ENCODE measurements at regions of chr7 and their contacts with region 1.

Region 1: DNA sequence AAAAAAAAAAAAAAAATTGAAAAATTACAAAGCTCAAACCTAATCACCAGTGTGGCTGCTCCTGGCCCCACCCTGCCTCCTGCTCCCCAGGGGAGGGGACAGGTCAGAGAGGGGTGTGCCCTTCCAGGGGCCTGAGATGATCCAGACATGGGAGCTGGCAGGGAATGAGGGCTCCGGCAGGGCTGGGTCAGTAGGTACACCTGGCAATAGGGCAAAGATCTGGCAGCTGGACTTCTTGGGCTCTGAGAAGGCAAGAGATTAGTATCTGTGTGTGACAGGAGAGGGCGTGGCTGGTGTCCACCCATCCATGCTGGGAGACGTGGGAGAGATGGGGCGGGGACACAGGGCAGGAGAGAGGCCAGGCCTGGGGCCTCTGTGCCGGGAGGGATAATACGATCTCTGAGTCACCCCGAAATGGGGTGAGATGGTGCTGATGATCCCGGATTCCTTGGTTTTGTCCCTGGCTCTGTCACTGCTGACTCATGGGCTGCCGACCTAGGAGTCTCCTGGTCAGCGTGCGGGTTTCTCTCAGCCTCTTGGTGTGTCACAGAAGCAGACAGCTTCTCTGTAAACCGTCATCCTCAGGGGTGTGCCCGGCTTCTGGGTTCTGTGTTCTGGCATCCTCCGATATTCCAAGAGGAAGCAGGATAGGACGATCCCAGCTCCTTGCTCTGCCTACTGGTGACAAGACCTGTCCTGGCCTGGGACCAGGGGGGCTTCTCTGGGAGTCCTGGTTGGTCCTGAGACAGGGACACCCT is 8.3 kb upstream of the CLDN4 start:
- DNase-seq: peak; percentile 98
- H3K4me3 Mint-ChIP-seq: peak overlapping the region; percentile 13
- H3K27ac Mint-ChIP-seq: peak overlapping the region; percentile 80
- H3K4me1 Mint-ChIP-seq: peaks cover 31% of the 10 kb centered on the region
- H3K27me3 Mint-ChIP-seq: no peaks in the 10 kb centered on the region
- CTCF ChIP-seq: no peak

Region 2: DNA sequence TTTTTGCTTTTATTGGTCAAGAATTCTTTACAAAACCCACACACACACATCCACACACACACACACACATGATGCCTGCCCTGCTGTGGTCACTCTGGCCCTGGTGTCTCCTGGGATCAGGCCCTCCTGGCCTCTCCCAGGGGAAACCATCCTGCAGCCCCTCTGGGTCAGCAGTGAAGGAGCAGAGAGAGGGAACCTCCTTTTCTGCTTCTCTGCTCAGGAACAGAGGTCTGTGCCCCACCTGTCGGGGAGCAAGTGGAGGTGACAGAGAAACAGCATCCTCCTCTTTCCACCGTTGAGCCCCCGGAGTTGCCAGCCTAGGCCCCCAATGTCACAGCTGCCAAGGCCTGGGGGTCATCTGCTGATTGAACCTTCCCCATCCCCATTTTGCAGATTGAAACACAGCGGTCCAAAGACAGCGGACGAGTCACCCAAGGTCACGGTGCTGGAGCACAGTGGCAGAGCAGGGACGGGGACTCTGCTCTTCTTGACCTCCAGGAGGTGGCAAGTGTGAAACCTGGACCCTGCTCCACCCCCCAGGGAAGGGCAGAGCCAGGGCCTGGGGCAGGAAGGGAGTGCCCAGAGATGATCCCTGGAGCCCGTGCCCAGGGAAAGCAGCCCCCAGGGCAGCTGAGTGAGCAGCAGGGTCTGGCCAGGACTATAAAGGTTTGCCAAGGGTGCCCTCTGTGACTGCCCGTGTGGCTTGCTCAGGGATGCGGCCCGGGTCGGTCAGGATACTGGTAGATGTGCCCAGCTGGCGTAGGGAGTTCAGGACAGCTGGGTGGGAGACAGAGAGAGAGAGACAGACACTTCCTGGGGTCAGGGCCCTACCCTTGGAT is 229.1 kb before region 1 on chr7:
- CTCF ChIA-PET with region 1: no interaction called
- POLR2A ChIA-PET with region 1: no interaction called
- intact Hi-C with region 1: no loop called
- DNase-seq: no peak
- H3K4me3 Mint-ChIP-seq: no peak overlapping the region
- H3K27ac Mint-ChIP-seq: no peak overlapping the region
- H3K4me1 Mint-ChIP-seq: no peaks in the 10 kb centered on the region
- H3K27me3 Mint-ChIP-seq: peaks cover 11% of the 10 kb centered on the region
- CTCF ChIP-seq: no peak

Region 3: DNA sequence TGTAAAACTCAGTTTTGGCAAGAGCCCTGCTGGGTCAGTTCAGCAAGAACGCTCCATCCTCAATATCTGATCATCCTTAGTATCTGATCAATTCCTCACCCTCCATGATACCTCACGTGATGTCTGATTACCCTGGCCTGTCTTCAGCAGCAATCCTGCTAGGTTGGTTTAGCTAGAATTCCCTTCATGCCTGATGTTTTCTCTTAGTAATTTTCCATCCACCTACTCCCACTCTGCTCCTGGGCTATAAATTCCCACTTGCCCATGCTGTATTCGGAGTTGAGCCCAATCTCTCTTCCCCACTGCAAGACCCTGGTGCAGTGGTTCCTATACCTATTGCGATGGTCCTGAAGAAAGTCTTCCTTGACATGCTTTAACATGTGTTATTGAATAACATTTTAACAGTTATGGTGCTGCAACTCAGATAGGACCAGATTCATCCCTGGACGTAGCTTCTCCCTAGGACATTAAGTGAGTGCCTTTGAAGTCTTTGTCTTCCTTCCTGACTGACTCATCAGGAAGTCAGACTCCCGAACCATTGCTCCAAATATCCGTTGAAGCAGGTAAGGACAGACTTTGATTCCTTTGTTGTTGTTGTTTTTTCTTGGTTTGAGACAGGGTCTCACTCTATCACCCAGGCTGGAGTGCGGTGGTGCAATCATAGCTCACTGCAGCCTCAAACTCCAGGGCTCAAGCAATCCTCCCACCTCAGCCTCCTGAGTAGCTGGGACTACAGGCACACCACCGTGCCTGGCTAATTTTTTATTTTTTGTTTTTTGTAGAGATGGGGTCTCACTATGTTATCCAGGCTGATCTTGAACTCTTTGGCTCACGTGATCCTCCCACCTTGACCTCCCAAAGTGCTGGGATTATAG is 23.0 kb before region 1 on chr7:
- CTCF ChIA-PET with region 1: interaction called, 4 read pairs
- POLR2A ChIA-PET with region 1: interaction called, 17 read pairs
- intact Hi-C with region 1: no loop called
- DNase-seq: peak; percentile 33
- H3K4me3 Mint-ChIP-seq: no peak overlapping the region
- H3K27ac Mint-ChIP-seq: no peak overlapping the region
- H3K4me1 Mint-ChIP-seq: peaks cover 7% of the 10 kb centered on the region
- H3K27me3 Mint-ChIP-seq: no peaks in the 10 kb centered on the region
- CTCF ChIP-seq: no peak

Region 4: DNA sequence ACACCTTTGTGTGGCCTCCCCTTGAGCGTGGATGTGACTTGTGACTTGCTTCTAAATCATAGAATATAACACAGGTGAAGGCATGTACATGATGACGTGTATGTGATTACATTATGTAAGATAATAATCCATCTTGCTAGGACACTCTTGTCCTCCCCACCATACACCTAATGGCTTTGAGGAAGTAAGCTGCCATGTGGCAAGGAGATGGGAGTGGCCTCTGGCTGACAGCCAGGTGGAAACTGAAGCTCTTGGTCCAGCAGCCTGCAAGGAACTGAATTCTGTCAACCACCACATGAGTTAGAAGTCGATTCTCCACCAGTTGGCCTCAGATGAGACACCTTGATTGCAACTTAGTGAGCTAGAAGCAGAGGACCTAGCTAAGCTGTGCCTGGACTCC is 138.1 kb after region 1 on chr7:
- CTCF ChIA-PET with region 1: no interaction called
- POLR2A ChIA-PET with region 1: no interaction called
- intact Hi-C with region 1: no loop called
- DNase-seq: peak; percentile 36
- H3K4me3 Mint-ChIP-seq: no peak overlapping the region
- H3K27ac Mint-ChIP-seq: no peak overlapping the region
- H3K4me1 Mint-ChIP-seq: no peaks in the 10 kb centered on the region
- H3K27me3 Mint-ChIP-seq: peaks cover 14% of the 10 kb centered on the region
- CTCF ChIP-seq: no peak